Esophagus muscularis mucosa (tissue), 4 donors: ENCODE measurements at regions of chr1 and their contacts with region 1.

Region 1: GRCh38 chr1:180881806-180882509 is 30.7 kb upstream of the KIAA1614 start:
- DNase-seq: no peak
- H3K4me3 ChIP-seq: no peak overlapping the region
- H3K27ac ChIP-seq: no peak overlapping the region
- H3K4me1 ChIP-seq: no peaks in the 10 kb centered on the region
- H3K27me3 ChIP-seq: no peaks in the 10 kb centered on the region
- CTCF ChIP-seq: peak; percentile 39 to 50 (median 47)
- EP300 ChIP-seq: no peak
- POLR2A ChIP-seq: no peak

Region 2: GRCh38 chr1:181166377-181167196 is 284.6 kb after region 1 on chr1:
- intact Hi-C with region 1: loop called (anchors 5 kb)
- DNase-seq: no peak
- H3K4me3 ChIP-seq: no peak overlapping the region
- H3K27ac ChIP-seq: no peak overlapping the region
- H3K4me1 ChIP-seq: peaks cover 0 to 5% (median 5%) of the 10 kb centered on the region in 4 donors
- H3K27me3 ChIP-seq: no peaks in the 10 kb centered on the region
- CTCF ChIP-seq: peak; percentile 83 to 88 (median 85)
- EP300 ChIP-seq: no peak
- POLR2A ChIP-seq: no peak

Region 3: DNA sequence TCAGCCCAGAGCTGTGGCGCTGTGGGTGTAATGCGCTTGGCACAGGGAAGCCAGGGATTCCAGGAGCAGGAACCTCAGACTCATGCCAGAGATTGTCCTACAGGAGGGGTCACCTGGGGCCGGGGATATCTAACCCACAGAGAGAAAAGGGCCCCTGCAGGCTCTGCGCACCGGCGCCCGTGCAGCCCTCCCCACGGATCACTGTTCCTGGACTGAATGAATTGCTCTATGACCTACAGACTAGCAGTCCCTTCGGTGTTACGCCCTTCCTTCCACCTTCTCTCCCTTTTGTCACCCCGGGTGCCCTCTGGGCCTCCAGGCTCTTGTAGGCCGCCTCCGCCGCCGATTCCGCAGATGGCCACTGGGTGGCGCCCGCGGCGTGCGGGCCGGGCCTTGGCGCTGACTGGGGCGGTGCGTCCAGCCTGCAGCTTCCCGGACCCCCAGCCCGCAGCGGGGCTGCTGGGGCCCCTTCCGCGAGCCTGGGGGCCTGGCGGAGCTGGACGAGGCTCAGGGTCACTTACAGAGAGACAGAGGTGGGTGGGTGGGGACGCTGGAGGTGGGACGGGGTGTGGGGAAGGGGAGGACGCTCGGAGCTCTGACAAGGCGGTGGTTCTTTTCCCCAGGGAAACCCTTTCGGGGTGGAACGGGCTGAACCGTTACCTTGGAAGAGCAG is 307.9 kb after region 1 on chr1:
- intact Hi-C with region 1: no loop called
- DNase-seq: no peak
- H3K4me3 ChIP-seq: peak overlapping the region; percentile 36 to 54 (median 38)
- H3K27ac ChIP-seq: no peak overlapping the region
- H3K4me1 ChIP-seq: peaks cover 8 to 11% (median 9%) of the 10 kb centered on the region in 4 donors
- H3K27me3 ChIP-seq: peaks cover 0 to 28% (median 0%) of the 10 kb centered on the region in 4 donors
- CTCF ChIP-seq: peak in 2 of 3 experiments; percentile 94 to 98
- EP300 ChIP-seq: no peak
- POLR2A ChIP-seq: no peak